Spleen (tissue), 13 donors: ENCODE measurements at regions of chrX and their contacts with region 1.

Region 1: DNA sequence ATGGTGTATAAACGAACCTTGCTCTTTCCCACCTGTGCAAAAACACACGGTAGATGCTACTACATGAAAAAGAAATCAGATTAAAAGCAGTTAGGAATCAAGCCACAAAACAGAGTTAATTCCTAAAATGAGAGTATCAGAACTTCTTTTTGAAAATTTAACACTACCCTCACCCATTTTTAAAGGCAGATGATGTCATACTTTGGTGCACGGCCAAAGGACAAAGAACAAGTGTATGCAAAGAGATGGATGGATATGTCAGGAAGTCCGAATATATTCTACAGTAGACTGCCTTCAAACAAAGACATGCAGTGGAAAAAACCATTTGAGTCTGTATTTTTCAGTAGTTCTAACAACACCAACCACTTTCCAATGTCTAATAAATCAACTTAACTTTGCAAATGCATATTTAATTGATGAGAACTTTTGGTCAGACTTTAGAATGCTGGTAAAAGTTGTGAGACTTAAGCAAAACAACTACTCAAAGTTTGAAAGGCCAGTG is 2.2 kb downstream of the AIFM1 start:
- DNase-seq: no peak
- H3K4me3 ChIP-seq: no peak overlapping the region
- H3K27ac ChIP-seq: no peak overlapping the region
- H3K4me1 ChIP-seq: peaks cover 0 to 42% (median 21%) of the 10 kb centered on the region in 6 donors
- H3K27me3 ChIP-seq: no peaks in the 10 kb centered on the region
- CTCF ChIP-seq: no peak
- POLR2A ChIP-seq: no peak

Region 2: GRCh38 chrX:130339408-130340222 is 176.2 kb after region 1 on chrX and contains the start of gene SLC25A14:
- intact Hi-C with region 1: loop called (anchors 5 kb)
- DNase-seq: peak; percentile 90
- H3K4me3 ChIP-seq: peak within 1 kb of the TSS; percentile 44 to 79 (median 66)
- H3K27ac ChIP-seq: peak within 1 kb of the TSS in 5 of 8 donors; percentile 33 to 80 (median 60)
- H3K4me1 ChIP-seq: peaks cover 0 to 13% (median 7%) of the 10 kb centered on the region in 6 donors
- H3K27me3 ChIP-seq: no peaks in the 10 kb centered on the region
- CTCF ChIP-seq: no peak
- POLR2A ChIP-seq: no peak
- total RNA-seq, gene SLC25A14: 7.7 to 15.6 (median 11.5) TPM